PC-9 (cell line): ENCODE measurements at regions of chr20 and their contacts with region 1.

Region 1: DNA sequence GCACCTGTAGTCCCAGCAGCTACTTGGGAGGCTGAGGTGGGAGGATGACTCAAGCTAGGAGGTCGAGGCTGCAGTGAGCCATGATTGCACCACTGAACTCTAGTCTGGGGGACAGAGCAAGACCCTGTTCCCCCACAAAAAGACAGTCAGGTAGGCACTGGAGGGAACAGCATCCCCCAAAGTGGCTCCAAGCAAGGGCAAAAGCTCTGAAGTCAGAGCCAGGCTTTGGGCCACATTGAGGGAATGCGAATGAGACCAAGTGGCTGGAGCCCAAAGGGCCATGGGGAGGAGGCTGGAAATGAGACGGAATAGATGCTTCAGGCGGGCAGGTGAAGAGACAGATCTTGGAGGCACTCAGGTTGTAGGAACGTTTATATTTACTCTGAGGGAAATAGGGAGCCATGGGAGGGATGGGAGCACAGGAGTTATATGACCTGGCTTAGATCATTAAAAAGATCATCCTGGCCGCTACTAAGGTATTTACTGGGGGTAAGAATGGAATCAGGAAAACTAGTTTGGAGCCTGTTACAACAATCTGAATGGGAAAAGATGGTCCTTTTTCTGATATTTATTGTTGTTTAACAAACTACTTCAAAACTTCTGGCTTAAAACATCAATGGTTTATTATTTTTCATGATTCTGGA is 229.6 kb upstream of the ZNF217 start:
- DNase-seq: no peak
- H3K4me3 ChIP-seq: no peak overlapping the region
- H3K27ac ChIP-seq: no peak overlapping the region
- H3K4me1 ChIP-seq: peaks cover 27% of the 10 kb centered on the region
- H3K27me3 ChIP-seq: no peaks in the 10 kb centered on the region
- CTCF ChIP-seq: no peak

Region 2: GRCh38 chr20:53692413-53693067 is 130.7 kb before region 1 on chr20:
- CTCF ChIA-PET with region 1: no interaction called
- POLR2A ChIA-PET with region 1: interaction called, 10 read pairs
- intact Hi-C with region 1: no loop called
- DNase-seq: no peak
- H3K4me3 ChIP-seq: no peak overlapping the region
- H3K27ac ChIP-seq: peak overlapping the region; percentile 82
- H3K4me1 ChIP-seq: peaks cover 42% of the 10 kb centered on the region
- H3K27me3 ChIP-seq: no peaks in the 10 kb centered on the region
- CTCF ChIP-seq: no peak